GM12878 (cell line): ENCODE measurements at regions of chr20 and their contacts with region 1.

Region 1: GRCh38 chr20:51385646-51386530 is 156.6 kb downstream of the NFATC2 start:
- DNase-seq: no peak
- ATAC-seq: peak; percentile 78
- H3K4me3 ChIP-seq: no peak overlapping the region
- H3K27ac ChIP-seq: no peak overlapping the region
- H3K4me1 ChIP-seq: peaks cover 31% of the 10 kb centered on the region
- H3K27me3 ChIP-seq: no peaks in the 10 kb centered on the region
- CTCF ChIP-seq: peak; percentile 54 to 68 (median 63); a peak in 5 of 6 replicates
- EP300 ChIP-seq: no peak
- POLR2A ChIP-seq: no peak
- RAD21 ChIP-seq: peak; percentile 74

Region 2: GRCh38 chr20:51265361-51265760 is 120.5 kb before region 1 on chr20:
- CTCF ChIA-PET with region 1: no interaction called
- POLR2A ChIA-PET with region 1: no interaction called
- RAD21 ChIA-PET with region 1: no interaction called
- SMC1A ChIA-PET with region 1: no interaction called
- in situ Hi-C with region 1: no loop called
- intact Hi-C with region 1: no loop called
- DNase-seq: no peak
- ATAC-seq: no peak
- H3K4me3 ChIP-seq: no peak overlapping the region
- H3K27ac ChIP-seq: no peak overlapping the region
- H3K4me1 ChIP-seq: no peaks in the 10 kb centered on the region
- H3K27me3 ChIP-seq: no peaks in the 10 kb centered on the region
- CTCF ChIP-seq: no peak
- EP300 ChIP-seq: no peak
- POLR2A ChIP-seq: no peak
- RAD21 ChIP-seq: no peak

Region 3: GRCh38 chr20:51413857-51414256 is 28.0 kb after region 1 on chr20:
- CTCF ChIA-PET with region 1: interaction called, 17 read pairs
- POLR2A ChIA-PET with region 1: no interaction called
- RAD21 ChIA-PET with region 1: interaction called, 11 read pairs
- SMC1A ChIA-PET with region 1: interaction called, 32 read pairs
- in situ Hi-C with region 1: no loop called
- intact Hi-C with region 1: no loop called
- DNase-seq: no peak
- ATAC-seq: peak; percentile 82
- H3K4me3 ChIP-seq: no peak overlapping the region
- H3K27ac ChIP-seq: peak overlapping the region; percentile 35
- H3K4me1 ChIP-seq: peaks cover 41% of the 10 kb centered on the region
- H3K27me3 ChIP-seq: no peaks in the 10 kb centered on the region
- CTCF ChIP-seq: no peak
- EP300 ChIP-seq: no peak
- POLR2A ChIP-seq: no peak
- RAD21 ChIP-seq: no peak

Region 4: DNA sequence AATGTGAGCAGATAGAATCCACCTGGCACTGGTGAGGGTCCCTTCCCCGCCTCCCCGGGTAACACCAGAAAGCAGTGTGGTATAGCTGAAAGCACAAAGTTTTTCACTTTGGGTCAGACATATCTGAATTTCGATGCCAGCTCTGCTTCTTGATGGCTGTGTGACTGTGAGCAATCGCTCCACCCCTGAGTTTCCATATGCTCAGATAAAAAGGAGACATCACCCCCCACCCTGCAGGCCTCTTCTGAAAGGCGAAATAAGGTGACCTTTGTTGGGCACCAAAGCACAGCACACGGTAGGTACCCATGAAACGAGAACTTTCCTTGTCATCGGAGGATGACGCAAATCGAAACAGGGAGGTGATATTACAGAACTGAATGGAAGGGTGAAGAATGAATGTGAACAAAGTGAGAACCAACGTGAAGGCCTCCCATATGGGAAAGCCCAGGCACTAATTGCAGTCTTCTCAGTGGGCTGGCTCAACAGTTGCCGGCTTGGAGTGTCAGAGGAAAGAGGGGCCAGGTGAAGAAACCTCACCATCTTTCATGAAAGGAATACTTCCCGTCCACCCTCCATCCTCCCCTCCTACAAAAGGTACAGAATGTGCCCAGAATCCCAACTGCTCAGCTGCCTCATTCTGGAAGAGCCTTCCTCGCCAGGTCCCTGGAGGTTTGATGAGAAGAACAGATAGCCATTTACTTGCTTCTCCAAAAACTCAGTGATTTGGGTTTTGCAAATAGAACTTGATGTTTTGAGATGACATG is 94.8 kb after region 1 on chr20:
- CTCF ChIA-PET with region 1: interaction called, 11 read pairs
- POLR2A ChIA-PET with region 1: no interaction called
- RAD21 ChIA-PET with region 1: interaction called, 4 read pairs
- SMC1A ChIA-PET with region 1: interaction called, 3 read pairs
- in situ Hi-C with region 1: no loop called
- intact Hi-C with region 1: no loop called
- DNase-seq: peak; percentile 84
- ATAC-seq: peak; percentile 92
- H3K4me3 ChIP-seq: peak overlapping the region; percentile 59; the same call in 1 of the 2 replicates
- H3K27ac ChIP-seq: peak overlapping the region; percentile 86
- H3K4me1 ChIP-seq: peaks cover 40% of the 10 kb centered on the region
- H3K27me3 ChIP-seq: no peaks in the 10 kb centered on the region
- CTCF ChIP-seq: no peak
- EP300 ChIP-seq: peak; percentile 89 to 94; a peak in 3 of 4 replicates
- POLR2A ChIP-seq: no peak
- RAD21 ChIP-seq: no peak

Region 5: GRCh38 chr20:51541189-51542032 is 155.5 kb after region 1 on chr20:
- CTCF ChIA-PET with region 1: interaction called, 28 read pairs
- POLR2A ChIA-PET with region 1: no interaction called
- RAD21 ChIA-PET with region 1: interaction called, 9 read pairs
- SMC1A ChIA-PET with region 1: interaction called, 20 read pairs
- in situ Hi-C with region 1: no loop called
- intact Hi-C with region 1: loop called (anchors 5 kb)
- DNase-seq: no peak
- ATAC-seq: peak; percentile 77
- H3K4me3 ChIP-seq: peak overlapping the region; percentile 88
- H3K27ac ChIP-seq: peak overlapping the region; percentile 82
- H3K4me1 ChIP-seq: peaks cover 23% of the 10 kb centered on the region
- H3K27me3 ChIP-seq: no peaks in the 10 kb centered on the region; a peak in 2 of 4 replicates
- CTCF ChIP-seq: no peak
- EP300 ChIP-seq: peak in 1 of 2 experiments; percentile 66; a peak in 2 of 4 replicates
- POLR2A ChIP-seq: peak; percentile 44
- RAD21 ChIP-seq: no peak

Region 6: DNA sequence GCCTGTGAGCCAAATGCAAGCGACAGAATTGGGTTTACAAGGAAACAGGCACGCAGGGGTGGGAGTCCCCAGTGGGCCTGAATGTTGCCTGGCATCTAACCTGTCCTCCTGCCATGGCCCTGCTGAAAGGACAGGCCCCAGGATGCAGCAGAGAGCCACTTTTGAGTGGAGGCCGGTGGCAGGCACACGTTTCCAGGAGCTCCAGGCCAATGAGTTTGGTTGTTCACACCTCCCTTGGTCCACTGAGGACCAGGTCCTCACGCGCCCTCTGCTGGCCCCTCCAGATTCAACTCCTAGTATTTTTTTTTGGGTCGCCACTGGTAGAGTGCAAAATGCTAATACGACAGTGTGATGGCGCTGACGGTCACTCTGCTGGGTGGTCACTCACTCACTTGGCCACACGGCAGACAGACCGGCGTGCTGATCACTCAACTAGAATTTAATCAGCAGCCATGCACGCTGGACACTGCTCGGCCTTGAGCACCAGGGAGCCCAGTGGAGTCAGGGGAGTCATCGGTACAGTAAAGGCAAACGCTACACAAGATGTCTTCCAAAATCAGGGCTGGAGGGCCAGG is 238.4 kb after region 1 on chr20:
- CTCF ChIA-PET with region 1: interaction called, 11 read pairs
- POLR2A ChIA-PET with region 1: interaction called, 4 read pairs
- RAD21 ChIA-PET with region 1: interaction called, 6 read pairs
- SMC1A ChIA-PET with region 1: interaction called, 5 read pairs
- in situ Hi-C with region 1: no loop called
- intact Hi-C with region 1: no loop called
- DNase-seq: no peak
- ATAC-seq: peak; percentile 83
- H3K4me3 ChIP-seq: no peak overlapping the region
- H3K27ac ChIP-seq: no peak overlapping the region
- H3K4me1 ChIP-seq: peaks cover 22% of the 10 kb centered on the region
- H3K27me3 ChIP-seq: no peaks in the 10 kb centered on the region; a peak in 1 of 4 replicates
- CTCF ChIP-seq: peak; percentile 72 to 82 (median 80); a peak in 5 of 6 replicates
- EP300 ChIP-seq: no peak
- POLR2A ChIP-seq: no peak
- RAD21 ChIP-seq: peak; percentile 69